ENCODE measurements at regions of chr9 and their contacts with region 1.

Region 1: DNA sequence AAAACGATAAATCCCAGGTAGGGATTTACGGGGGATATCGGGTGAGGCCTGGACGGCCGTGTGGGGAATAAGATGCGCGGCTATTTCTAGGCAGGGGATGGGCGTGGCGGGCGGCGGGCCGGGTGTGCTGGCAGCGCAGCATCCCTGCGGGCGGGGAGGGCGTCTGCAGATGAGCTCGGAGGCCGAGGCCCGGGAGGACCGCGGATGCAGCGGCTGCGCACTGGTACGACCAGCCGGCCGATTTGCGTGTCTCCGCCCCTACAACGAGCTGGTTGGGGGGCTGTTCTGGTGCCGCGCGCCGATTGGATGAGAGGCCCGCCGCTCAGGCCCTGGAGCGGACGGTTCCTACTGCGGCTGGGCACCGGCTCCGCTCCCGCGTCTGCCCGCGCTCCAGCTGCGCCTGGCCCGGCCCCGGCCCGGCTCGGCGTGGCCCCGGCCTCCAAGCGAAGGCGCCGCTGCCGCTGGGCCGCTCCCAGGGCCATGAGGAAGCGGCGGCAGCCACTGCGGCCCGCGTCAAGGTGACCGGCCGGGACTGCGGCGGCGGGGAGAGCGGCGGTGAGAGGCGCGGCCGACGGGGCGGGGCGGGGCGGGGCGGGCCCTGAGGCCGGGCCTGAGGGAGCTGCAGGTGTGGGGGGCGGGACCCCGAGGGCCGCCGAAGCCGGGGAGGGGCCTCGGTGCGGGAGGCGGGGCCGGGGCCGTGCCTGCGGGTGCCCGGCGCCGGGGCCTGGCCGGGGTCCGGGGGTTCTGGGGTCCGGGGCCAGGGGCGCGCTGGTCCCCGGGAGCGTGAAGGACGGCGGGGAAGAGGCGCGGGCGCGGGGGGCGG is at the start of gene RALGPS1:
- DNase-seq: peak; percentile 95
- ATAC-seq: peak; percentile 100
- H3K4me3 Mint-ChIP-seq: peak within 1 kb of the TSS; percentile 70
- H3K27ac Mint-ChIP-seq: no peak within 1 kb of the TSS
- H3K4me1 Mint-ChIP-seq: peaks cover 3% of the 10 kb centered on the region
- H3K27me3 Mint-ChIP-seq: peaks cover 14% of the 10 kb centered on the region
- total RNA-seq, gene RALGPS1: 1.2 to 2.2 TPM

Region 2: DNA sequence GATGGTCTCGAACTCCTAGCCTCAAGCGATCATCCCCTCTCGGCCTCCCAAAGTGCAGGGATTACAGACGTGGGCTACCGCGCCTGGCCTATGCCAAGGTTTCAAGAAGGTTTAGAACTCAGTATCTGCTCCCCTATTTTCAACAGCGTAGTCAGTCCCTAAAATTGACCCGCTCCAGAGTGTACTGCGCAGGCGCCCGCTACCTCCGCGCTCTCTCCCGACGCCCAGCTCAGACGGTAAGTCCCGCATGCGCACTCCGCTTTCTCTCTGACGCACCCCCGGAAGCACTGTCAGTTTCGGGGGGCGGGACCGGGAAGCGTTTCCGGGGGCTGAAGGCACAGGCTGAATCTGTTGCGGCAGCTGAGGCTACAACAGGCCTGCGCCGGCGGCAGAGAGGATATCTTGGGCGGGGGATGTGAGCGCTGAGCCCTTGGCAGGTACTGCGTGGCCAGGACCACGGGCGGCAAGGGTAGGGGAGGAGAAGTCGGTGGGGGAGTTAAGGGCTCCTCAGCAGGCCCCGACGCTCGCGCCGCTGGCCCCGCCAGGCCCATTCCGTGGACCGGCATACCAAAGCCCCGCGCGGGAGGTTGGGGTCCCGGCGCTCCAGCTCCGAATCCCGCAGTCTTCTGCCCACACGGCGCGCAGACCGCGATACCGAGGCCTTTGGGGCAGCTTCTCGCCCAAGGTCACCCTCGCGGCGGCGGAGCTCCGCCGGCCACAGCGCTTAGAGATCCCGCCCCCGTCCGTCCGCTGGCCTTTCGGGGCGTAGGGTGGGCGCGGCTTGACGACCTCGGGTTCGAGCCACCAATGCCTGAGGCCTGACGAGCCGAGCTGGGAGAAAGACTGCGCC is 109.7 kb before region 1 on chr9 and contains the start of gene ZBTB43:
- CTCF ChIA-PET with region 1: no interaction called
- POLR2A ChIA-PET with region 1: no interaction called
- intact Hi-C with region 1: loop called in 1 of 2 experiments (anchors 1 kb)
- DNase-seq: peak; percentile 99
- ATAC-seq: peak; percentile 85
- H3K4me3 Mint-ChIP-seq: peak within 1 kb of the TSS; percentile 96
- H3K27ac Mint-ChIP-seq: peak within 1 kb of the TSS; percentile 100
- H3K4me1 Mint-ChIP-seq: peaks cover 36% of the 10 kb centered on the region
- H3K27me3 Mint-ChIP-seq: no peaks in the 10 kb centered on the region
- total RNA-seq, gene ZBTB43: 19.3 to 23.0 TPM

Region 3: DNA sequence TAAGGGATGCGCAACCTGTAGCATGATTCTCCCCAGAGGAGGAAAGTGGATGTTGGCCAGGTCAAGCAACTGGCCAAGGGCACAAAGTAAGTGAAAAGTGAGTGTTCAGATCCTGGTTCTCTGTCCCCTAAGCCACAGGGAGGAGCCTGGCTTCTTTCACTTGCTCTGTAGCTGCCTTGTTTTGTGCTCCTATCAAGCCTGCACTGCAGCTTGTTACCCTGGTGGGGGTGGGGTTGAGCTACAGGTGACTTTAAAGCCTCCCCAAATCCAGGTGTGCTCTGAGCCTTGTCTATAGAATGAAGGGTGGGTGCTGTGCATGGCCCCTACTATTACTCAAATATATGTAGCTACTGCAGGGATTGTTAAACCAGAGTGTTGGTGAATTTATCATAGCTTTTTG is 32.9 kb after region 1 on chr9:
- CTCF ChIA-PET with region 1: no interaction called
- POLR2A ChIA-PET with region 1: no interaction called
- intact Hi-C with region 1: no loop called
- DNase-seq: peak; percentile 28
- ATAC-seq: no peak
- H3K4me3 Mint-ChIP-seq: no peak overlapping the region
- H3K27ac Mint-ChIP-seq: no peak overlapping the region
- H3K4me1 Mint-ChIP-seq: no peaks in the 10 kb centered on the region
- H3K27me3 Mint-ChIP-seq: peaks cover 5% of the 10 kb centered on the region

Region 4: DNA sequence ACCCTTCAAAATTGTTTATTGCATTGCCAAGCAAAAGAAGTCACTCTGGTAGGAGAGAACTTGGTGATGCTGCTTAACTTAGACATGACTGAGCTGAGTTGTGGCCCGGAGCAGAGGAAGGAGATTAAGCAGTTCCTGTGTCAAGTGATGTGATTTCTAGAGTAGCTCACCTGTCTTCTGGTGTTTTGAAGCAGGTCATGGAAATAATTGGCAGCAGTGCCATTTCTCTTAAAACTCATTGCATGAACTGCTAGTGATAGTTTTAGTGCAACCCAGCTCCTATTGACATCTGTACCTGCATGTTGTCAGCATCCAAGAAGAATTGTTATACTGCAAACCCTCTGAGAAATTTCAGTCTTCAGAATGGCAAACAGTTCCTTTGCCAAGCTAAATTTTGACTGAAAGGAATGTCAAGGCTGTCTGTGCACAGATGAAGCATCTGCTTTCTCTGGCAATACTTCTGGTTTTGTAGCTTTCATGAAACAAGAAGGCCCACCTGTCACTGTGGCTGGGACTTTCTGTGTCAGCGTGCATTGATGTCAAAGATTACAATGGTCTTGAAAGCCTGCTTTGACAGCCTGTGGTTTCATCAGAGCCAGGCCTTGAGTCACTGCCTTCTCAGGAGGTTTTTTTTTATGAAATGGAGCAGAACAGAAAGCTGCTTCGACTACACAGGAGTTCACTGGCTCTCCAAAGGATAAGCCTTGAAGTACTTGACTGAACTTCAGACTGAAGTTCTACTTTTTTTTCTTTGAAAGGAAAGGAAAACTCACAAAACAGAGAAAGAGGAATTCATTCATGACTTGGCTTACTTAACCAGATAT is 90.5 kb after region 1 on chr9:
- CTCF ChIA-PET with region 1: no interaction called
- POLR2A ChIA-PET with region 1: no interaction called
- intact Hi-C with region 1: loop called in 1 of 2 experiments (anchors 1 kb)
- DNase-seq: peak; percentile 87
- ATAC-seq: peak; percentile 98
- H3K4me3 Mint-ChIP-seq: no peak overlapping the region
- H3K27ac Mint-ChIP-seq: no peak overlapping the region
- H3K4me1 Mint-ChIP-seq: peaks cover 24% of the 10 kb centered on the region
- H3K27me3 Mint-ChIP-seq: peaks cover 45% of the 10 kb centered on the region

Region 5: DNA sequence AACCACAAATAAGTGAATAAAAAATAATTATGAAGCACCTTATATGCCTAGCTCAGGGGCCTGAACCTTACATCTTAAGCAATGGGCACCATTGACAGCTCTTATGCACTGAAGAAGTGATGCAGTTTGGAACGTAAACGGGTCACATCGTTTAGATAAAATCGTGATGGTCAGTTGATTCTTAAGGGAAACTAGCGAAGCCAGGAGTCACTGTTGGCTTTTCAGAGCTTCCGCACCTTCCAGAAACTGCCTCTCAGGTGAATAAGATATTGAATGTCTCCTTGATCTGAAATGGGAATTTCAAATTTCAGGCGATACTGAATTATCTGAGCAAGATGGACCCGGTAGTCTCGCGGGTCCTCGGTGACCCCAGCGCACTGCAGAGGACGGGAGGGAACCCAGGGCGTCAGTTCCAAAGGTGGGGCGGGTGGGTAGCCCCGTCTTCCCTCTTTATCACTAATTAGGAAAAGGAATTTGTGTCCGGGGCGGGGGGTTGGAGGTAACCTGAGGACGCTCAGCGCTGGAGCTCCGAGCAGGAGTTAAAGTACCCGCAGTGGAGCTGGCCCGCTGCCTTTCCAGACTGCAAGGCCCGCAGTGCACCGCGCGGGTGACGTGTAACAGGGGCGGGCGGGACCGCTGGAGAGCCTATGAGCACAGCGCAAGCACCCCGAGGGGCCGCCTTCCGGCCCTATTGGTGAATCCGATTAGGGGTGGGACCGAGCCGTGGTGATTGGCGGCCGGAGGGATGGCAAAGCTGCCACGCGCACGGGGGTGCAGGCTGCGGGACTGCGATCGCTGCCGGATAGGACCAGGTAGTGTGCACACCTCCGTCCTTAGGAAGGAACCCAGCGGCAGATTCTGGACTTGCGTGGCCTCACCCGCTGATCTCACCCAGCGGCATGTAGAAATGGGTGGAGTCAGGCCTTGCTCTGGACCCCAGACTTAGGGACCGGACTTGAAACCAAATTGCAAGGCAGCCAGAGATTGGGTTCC is 330.2 kb after region 1 on chr9:
- CTCF ChIA-PET with region 1: no interaction called
- POLR2A ChIA-PET with region 1: no interaction called
- intact Hi-C with region 1: loop called in 1 of 2 experiments (anchors 1 kb)
- DNase-seq: peak; percentile 98
- ATAC-seq: peak; percentile 100
- H3K4me3 Mint-ChIP-seq: peak overlapping the region; percentile 78
- H3K27ac Mint-ChIP-seq: peak overlapping the region; percentile 59
- H3K4me1 Mint-ChIP-seq: peaks cover 6% of the 10 kb centered on the region
- H3K27me3 Mint-ChIP-seq: peaks cover 5% of the 10 kb centered on the region

Region 6: GRCh38 chr9:127715394-127716337 is 801.0 kb after region 1 on chr9 and contains the starts of genes PTRH1 and TTC16:
- CTCF ChIA-PET with region 1: no interaction called
- POLR2A ChIA-PET with region 1: no interaction called
- intact Hi-C with region 1: loop called in 1 of 2 experiments (anchors 5 kb)
- DNase-seq: peak; percentile 99
- ATAC-seq: peak; percentile 97
- H3K4me3 Mint-ChIP-seq: peak within 1 kb of the TSS; percentile 92
- H3K27ac Mint-ChIP-seq: peak within 1 kb of the TSS; percentile 97
- H3K4me1 Mint-ChIP-seq: peaks cover 25% of the 10 kb centered on the region
- H3K27me3 Mint-ChIP-seq: no peaks in the 10 kb centered on the region
- total RNA-seq, gene PTRH1: 12.9 to 15.1 TPM
- total RNA-seq, gene TTC16: 0.16 to 0.30 TPM

Measured in activated CD4-positive, alpha-beta T cell treated with anti-CD3 and anti-CD28 coated beads for 36 hours (primary cell).